ENCODE measurements at regions of chr10 and their contacts with region 1.

Region 1: GRCh38 chr10:8473205-8473604 is 418.7 kb downstream of the GATA3 start:
- DNase-seq: no peak
- H3K4me3 ChIP-seq: no peak overlapping the region
- H3K27ac ChIP-seq: no peak overlapping the region
- H3K4me1 ChIP-seq: no peaks in the 10 kb centered on the region
- H3K27me3 ChIP-seq: no peaks in the 10 kb centered on the region
- CTCF ChIP-seq: no peak
- POLR2A ChIP-seq: no peak

Region 2: DNA sequence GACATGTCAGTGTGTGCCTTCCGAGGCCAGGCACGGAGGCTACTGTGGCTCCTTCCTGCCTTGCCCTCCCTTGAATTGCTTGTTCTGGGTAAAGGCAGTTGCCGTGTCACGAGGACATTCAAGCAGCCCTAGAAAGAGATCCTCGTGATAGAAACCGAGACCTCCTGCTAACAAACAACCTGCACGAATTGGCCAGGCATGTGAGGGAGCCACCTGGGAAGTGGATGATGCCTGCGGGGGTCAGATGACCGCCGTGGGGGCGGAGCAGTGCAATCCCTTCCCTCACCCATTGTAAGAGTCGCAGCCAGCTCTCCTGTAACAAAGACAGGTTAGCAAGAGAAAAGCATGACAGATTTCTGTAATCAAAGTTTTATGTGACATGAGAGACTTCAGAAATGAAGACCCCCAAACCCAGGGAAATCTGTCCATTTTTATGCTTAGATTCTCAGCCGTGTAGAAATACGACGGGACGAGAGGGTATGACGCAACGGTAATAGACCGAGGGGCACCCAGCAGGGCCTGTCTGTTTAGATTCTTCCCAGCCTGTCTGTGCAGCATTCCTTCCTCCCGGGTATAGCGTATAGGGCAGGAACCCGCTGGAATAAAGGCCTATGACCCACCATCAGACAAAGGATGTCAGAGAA is 177.0 kb before region 1 on chr10:
- intact Hi-C with region 1: no loop called
- DNase-seq: no peak
- H3K4me3 ChIP-seq: no peak overlapping the region
- H3K27ac ChIP-seq: no peak overlapping the region
- H3K4me1 ChIP-seq: no peaks in the 10 kb centered on the region
- H3K27me3 ChIP-seq: no peaks in the 10 kb centered on the region
- CTCF ChIP-seq: no peak
- POLR2A ChIP-seq: no peak

Region 3: GRCh38 chr10:8539056-8539455 is 65.9 kb after region 1 on chr10:
- intact Hi-C with region 1: loop called (anchors 2 kb)
- DNase-seq: no peak
- H3K4me3 ChIP-seq: no peak overlapping the region
- H3K27ac ChIP-seq: no peak overlapping the region
- H3K4me1 ChIP-seq: no peaks in the 10 kb centered on the region
- H3K27me3 ChIP-seq: no peaks in the 10 kb centered on the region
- CTCF ChIP-seq: no peak
- POLR2A ChIP-seq: no peak